ENCODE measurements at regions of chr7 and their contacts with region 1.

Region 1: DNA sequence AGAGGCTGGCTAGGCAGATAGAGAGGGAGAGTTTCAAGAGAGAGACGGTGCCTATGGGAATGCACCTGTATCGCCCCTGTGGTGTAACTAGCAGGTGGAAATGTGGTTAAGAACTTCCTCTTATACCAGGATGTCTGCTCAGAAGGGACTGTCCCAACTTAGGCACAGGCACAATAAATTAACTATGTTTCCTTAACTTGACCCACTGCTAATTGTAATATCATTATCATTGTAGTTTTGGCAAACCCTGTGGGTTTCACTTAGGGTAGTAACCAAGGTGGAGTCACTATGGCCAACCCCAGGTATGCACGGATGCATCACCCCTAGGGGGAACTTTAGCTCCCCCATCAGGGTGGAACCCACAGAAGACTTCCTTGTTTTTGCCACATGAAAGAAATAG is 455.7 kb downstream of the DGKB start:
- DNase-seq: no peak
- H3K4me3 ChIP-seq: no peak overlapping the region
- H3K27ac ChIP-seq: no peak overlapping the region
- H3K27me3 ChIP-seq: no peaks in the 10 kb centered on the region
- CTCF ChIP-seq: no peak

Region 2: GRCh38 chr7:14457568-14458453 is 11.0 kb after region 1 on chr7:
- CTCF ChIA-PET with region 1: interaction called, 12 read pairs
- POLR2A ChIA-PET with region 1: no interaction called
- DNase-seq: peak; percentile 70
- H3K4me3 ChIP-seq: no peak overlapping the region
- H3K27ac ChIP-seq: no peak overlapping the region
- H3K27me3 ChIP-seq: no peaks in the 10 kb centered on the region
- CTCF ChIP-seq: peak; percentile 92

Region 3: DNA sequence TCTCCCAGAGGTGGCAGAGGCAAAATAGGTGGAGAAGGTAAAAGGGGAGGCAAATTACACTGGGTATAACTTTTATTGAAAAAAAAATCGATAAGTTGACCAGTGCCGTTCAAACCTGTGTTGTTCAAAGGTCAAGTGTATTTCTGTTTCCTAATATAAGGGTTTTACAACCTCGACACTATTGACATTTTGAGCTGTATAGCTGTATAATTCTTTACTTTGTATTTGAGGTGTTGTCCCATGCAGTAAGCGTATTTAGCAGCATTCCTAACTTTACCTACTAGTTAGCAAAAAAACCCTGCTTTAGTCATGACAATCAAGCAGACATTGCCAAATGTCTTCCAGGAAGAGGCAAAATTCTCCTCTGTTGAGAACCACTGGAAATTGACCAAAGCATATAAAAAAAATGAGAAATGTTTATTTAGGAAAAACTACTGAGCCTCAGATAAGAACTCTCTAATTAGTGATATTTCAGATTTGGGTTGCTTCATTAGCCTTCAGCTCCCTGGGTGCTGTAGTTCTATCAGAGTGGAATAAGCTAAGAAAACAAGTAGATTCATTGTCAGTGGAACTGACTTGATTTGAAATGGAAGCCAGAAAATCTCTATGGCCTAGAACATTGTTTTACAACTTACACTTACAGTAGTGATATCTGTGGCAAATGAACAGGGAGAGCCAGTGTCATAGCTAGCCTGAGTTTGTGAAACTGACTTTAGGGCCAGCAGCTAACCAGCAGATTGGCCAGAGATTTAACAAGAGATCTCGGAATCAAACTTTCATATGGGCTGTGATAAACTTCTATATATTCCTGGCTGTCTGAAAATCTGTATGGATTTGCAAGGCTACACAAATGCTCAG is 124.2 kb after region 1 on chr7:
- CTCF ChIA-PET with region 1: no interaction called
- POLR2A ChIA-PET with region 1: no interaction called
- DNase-seq: no peak
- H3K4me3 ChIP-seq: no peak overlapping the region
- H3K27ac ChIP-seq: no peak overlapping the region
- H3K27me3 ChIP-seq: no peaks in the 10 kb centered on the region
- CTCF ChIP-seq: no peak